Prostate gland (tissue), 2 donors: ENCODE measurements at regions of chr7 and their contacts with region 1.

Region 1: GRCh38 chr7:128455551-128456254 is at the start of gene HILPDA:
- DNase-seq: peak; percentile 88
- H3K4me3 ChIP-seq: peak within 1 kb of the TSS; percentile 67 to 74
- H3K27ac ChIP-seq: peak within 1 kb of the TSS; percentile 88 to 90
- H3K4me1 ChIP-seq: peaks cover 23% of the 10 kb centered on the region
- H3K27me3 ChIP-seq: no peaks in the 10 kb centered on the region
- CTCF ChIP-seq: peak in 1 of 4 experiments; percentile 29
- POLR2A ChIP-seq: peak; percentile 86
- total RNA-seq, gene HILPDA: 6.9 to 41.5 TPM

Region 2: DNA sequence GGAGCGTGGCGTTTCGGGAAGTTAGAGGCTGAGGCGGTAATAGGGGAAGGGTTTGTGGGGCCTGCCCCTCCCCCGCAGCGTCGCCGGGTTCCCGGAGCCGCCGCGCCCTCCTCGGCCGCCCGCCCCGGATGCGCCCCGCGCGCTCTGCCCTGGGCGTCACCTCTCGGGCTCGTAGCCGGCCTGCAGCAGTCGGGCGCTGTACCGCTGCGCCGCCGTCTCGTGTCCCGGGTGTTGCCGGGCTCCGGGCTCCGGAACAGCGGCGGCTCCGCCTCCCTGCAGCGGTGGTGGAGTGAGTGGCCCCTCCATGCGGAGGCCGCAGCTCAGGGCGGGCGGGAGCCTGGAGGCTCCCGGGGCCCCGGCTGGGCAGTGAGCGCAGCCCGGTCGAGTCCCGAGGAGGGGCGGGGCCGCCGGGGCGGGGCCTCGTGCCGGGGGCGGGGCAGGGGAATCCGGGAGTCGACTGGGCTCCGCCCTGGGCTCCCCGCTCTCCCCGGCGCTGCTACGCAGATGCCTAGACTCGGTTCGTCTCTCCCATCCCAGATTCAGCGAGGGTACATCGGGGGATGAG is 46.0 kb before region 1 on chr7 and contains the start of gene IMPDH1:
- intact Hi-C with region 1: loop called (anchors 10 kb)
- DNase-seq: peak; percentile 90
- H3K4me3 ChIP-seq: peak within 1 kb of the TSS; percentile 63 to 80
- H3K27ac ChIP-seq: peak within 1 kb of the TSS; percentile 89 to 93
- H3K4me1 ChIP-seq: peaks cover 17% of the 10 kb centered on the region
- H3K27me3 ChIP-seq: no peaks in the 10 kb centered on the region
- CTCF ChIP-seq: no peak
- POLR2A ChIP-seq: peak; percentile 66
- total RNA-seq, gene IMPDH1: 48.2 to 91.6 TPM

Region 3: DNA sequence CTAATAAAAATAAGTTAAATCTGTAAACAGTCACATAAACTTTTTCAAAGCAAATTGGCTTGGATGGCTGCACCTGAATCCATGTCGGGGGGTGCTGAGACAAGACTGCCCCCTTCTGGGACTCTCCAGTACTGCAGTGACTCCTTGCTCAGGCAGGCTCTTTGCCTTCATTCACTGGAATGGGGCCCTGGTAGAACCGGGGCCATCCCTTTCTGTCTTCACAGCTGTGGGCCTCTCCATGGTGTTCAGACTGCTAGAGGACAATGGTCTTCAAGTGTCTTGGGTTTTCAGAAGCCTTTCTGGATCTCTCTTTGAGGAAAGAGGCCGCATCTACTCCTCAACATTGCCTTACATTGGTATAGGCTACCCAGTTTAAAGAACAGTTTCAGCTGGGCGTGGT is 29.9 kb before region 1 on chr7:
- intact Hi-C with region 1: loop called (anchors 2 kb)
- DNase-seq: peak; percentile 58
- H3K4me3 ChIP-seq: no peak overlapping the region
- H3K27ac ChIP-seq: no peak overlapping the region
- H3K4me1 ChIP-seq: no peaks in the 10 kb centered on the region
- H3K27me3 ChIP-seq: no peaks in the 10 kb centered on the region
- CTCF ChIP-seq: peak; percentile 79 to 91 (median 85)
- POLR2A ChIP-seq: no peak

Region 4: DNA sequence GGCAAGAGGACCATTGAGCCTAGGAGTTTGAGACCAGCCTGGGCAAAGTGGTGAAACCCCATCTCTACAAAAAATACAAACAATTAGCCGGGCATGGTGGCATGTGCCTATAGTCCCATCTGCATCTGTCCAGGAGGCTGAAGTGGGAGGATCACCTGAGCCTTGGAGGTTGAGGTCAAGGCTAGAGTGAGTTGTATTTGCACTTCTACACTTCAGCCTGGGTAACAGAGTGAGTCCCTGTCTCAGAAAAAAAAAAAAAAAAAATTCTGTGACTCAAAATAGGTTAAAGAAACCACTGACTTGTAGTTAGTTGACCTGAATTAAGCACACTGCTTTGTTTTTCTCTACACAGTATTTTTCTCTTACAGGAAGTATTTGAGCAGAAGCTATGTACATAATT is 95.2 kb after region 1 on chr7:
- intact Hi-C with region 1: no loop called
- DNase-seq: no peak
- H3K4me3 ChIP-seq: no peak overlapping the region
- H3K27ac ChIP-seq: no peak overlapping the region
- H3K4me1 ChIP-seq: no peaks in the 10 kb centered on the region
- H3K27me3 ChIP-seq: no peaks in the 10 kb centered on the region
- CTCF ChIP-seq: no peak
- POLR2A ChIP-seq: no peak